ENCODE measurements at regions of chr10 and their contacts with region 1.

Region 1: GRCh38 chr10:12795315-12796110 is 206.0 kb downstream of the CCDC3 start:
- DNase-seq: no peak
- H3K4me3 ChIP-seq: no peak overlapping the region
- H3K27ac ChIP-seq: no peak overlapping the region
- H3K4me1 ChIP-seq: peaks cover 4% of the 10 kb centered on the region
- H3K27me3 ChIP-seq: no peaks in the 10 kb centered on the region
- CTCF ChIP-seq: no peak
- POLR2A ChIP-seq: no peak

Region 2: GRCh38 chr10:12628964-12629766 is 166.3 kb before region 1 on chr10:
- intact Hi-C with region 1: no loop called
- DNase-seq: peak; percentile 47
- H3K4me3 ChIP-seq: no peak overlapping the region
- H3K27ac ChIP-seq: no peak overlapping the region
- H3K4me1 ChIP-seq: peaks cover 5% of the 10 kb centered on the region
- H3K27me3 ChIP-seq: no peaks in the 10 kb centered on the region
- CTCF ChIP-seq: no peak
- POLR2A ChIP-seq: no peak

Region 3: DNA sequence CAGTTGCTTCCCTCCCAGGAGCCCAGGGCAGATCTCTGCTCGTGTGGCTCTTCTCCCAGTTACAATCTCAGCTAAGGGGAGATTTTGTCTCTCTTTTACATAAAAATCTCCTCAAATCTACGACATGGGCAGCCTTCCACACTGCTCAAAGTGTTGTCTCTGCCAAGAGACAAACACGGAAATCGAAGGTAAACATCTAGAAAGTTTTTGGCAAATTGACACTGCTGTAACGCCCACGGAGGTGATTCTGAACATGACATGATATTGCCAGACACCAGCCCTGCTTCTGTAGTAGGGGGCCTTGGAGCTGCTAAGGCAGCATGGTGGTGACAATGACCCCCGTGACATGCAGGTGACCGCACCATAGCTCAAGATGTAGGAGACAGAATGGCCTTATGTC is 77.7 kb after region 1 on chr10:
- intact Hi-C with region 1: loop called (anchors 5 kb)
- DNase-seq: peak; percentile 17
- H3K4me3 ChIP-seq: no peak overlapping the region
- H3K27ac ChIP-seq: peak overlapping the region; percentile 62 to 63
- H3K4me1 ChIP-seq: peaks cover 6% of the 10 kb centered on the region
- H3K27me3 ChIP-seq: no peaks in the 10 kb centered on the region
- CTCF ChIP-seq: no peak
- POLR2A ChIP-seq: no peak

Region 4: DNA sequence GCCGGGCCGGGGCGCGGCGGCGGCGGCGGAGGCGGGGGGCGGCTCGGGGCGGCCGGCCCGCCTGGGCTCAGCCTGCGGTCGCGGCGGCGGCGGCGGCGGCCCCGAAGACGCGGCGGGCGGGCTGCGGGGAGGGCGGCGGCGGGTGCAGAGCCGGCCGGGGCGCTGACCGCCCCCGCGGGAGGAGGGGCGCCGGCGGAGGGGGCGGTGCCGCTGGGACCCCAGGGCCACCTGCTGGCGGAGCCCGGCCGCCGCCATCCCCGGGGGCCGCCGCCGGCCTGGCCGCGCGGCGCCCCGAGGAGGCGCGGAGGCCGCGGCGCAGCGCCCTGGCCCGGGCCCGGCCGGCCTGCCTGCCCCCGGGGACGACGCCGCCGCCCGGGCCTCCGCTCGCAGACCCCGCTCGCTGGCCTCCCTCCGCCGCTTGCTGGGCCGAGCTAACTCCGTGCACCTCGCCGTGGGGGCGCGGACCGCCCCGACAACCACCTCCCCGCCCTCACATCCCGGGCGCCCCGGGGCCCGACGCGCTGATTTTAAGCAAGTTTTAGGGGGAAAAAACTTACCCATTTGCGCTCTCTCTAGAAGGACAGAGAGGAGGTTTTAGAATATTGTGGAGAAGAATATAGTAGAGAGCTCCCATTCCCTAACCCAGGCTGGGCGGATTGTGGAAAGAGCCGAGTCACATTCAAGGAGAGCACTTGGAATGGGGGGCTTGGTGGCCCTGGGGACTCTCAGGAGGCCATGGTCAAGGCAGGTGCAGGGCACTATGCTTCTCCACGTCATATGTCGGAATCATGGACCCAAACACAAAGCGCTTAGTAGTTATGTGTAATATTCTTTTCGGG is 733.6 kb after region 1 on chr10 and contains the start of gene BEND7:
- intact Hi-C with region 1: no loop called
- DNase-seq: no peak
- H3K4me3 ChIP-seq: peak within 1 kb of the TSS; percentile 49 to 53
- H3K27ac ChIP-seq: peak within 1 kb of the TSS; percentile 45 to 58
- H3K4me1 ChIP-seq: no peaks in the 10 kb centered on the region
- H3K27me3 ChIP-seq: no peaks in the 10 kb centered on the region
- CTCF ChIP-seq: no peak
- POLR2A ChIP-seq: no peak
- total RNA-seq, gene BEND7: 10.1 to 44.5 TPM